RWPE1 (cell line): ENCODE measurements at regions of chr5 and their contacts with region 1.

Region 1: GRCh38 chr5:82439750-82440445 is 161.7 kb upstream of the RPS23 start:
- DNase-seq: no peak
- H3K27ac ChIP-seq: no peak overlapping the region
- CTCF ChIP-seq: no peak

Region 2: DNA sequence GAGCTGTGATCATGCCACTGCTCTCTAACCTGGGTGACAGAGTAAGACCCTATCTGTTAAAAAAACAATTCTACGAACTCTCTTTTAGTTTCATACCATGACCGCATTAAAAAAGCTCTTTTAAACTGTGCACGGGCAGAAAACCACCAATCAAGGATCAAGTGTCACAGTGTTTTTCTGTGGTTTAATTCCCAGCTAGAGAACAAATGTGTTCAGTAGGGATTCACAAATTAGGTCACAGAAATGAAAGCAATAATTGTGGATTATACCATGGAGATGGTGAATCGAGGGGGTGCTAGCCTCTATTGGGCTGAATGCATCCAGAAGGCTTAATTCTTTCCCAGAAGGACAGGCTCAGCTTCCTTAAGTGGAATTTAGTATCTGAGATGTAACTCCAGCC is 388.9 kb before region 1 on chr5:
- CTCF ChIA-PET with region 1: no interaction called
- POLR2A ChIA-PET with region 1: interaction called, 11 read pairs
- DNase-seq: no peak
- H3K27ac ChIP-seq: no peak overlapping the region
- CTCF ChIP-seq: no peak

Region 3: DNA sequence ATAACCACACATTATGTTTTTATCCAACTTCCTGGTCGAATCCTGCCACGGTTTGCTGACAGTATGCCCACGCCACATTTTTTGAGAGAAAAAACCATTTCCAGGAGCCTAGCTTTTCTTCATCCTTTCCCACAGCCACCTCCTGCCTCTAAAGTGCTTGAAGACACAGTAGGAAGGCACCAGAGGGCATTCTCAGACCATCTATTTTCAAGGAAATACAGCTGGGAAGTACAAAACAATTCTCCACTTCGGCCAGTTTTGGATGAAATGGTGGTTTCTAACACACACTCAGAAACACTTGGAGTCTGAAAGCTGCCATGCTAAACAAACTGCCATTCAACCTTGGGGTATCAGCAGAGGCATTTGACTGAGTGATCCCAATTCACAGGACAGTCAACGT is 75.4 kb before region 1 on chr5:
- CTCF ChIA-PET with region 1: no interaction called
- POLR2A ChIA-PET with region 1: no interaction called
- DNase-seq: no peak
- H3K27ac ChIP-seq: no peak overlapping the region
- CTCF ChIP-seq: no peak